Ascending aorta (tissue), 2 donors: ENCODE measurements at regions of chr6 and their contacts with region 1.

Region 1: GRCh38 chr6:31665501-31666336 is at the start of gene CSNK2B:
- DNase-seq: peak; percentile 97 to 99
- H3K4me3 ChIP-seq: peak within 1 kb of the TSS; percentile 72 to 97
- H3K27ac ChIP-seq: peak within 1 kb of the TSS; percentile 91 to 97
- H3K4me1 ChIP-seq: peaks cover 16 to 34% of the 10 kb centered on the region in 2 donors
- H3K27me3 ChIP-seq: no peaks in the 10 kb centered on the region
- CTCF ChIP-seq: peak in 1 of 3 experiments; percentile 35
- total RNA-seq, gene CSNK2B: 148 TPM

Region 2: DNA sequence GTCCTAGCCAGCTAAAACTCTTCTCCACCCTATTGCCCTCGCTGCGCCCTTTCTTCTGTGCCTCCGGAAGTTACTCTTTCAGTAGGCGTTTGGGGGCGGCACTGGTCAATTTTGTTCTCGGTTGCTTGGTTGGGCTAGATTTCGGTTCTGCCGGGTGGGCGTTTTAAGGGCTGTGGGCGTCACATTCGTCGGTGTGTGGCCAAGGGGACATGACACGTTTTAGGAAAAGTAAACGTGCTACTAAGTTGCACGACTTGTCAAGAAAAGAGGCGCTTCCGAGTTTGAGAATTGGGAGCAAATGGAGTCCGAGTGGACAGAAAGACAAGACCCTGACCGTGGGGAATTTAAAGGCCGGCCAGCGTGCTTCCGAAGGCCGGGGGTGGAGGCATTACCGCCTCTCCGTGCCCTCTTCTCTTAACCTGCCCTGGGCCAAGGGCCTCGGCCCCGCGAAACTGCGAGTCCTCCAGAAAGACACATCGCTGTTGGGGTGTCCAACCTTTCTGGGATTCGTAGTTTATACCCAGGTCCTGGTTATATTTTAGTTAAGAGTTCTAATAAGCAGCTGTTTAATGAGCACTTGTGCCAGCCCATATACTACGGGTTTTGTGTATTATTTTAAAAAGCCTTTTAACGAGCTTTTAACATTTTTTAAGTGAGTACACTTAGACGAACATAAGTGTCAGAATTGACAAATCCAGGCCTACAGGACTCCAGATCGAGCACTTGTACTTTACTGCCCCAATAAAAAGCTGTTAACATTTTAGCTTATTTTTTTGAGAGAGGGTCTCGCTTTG is 12.6 kb before region 1 on chr6:
- intact Hi-C with region 1: loop called (anchors 1 kb)
- DNase-seq: peak; percentile 56 to 96
- H3K4me3 ChIP-seq: peak overlapping the region; percentile 70 to 86
- H3K27ac ChIP-seq: peak overlapping the region; percentile 93 to 98
- H3K4me1 ChIP-seq: peaks cover 4 to 19% of the 10 kb centered on the region in 2 donors
- H3K27me3 ChIP-seq: no peaks in the 10 kb centered on the region
- CTCF ChIP-seq: peak in 1 of 3 experiments; percentile 26

Region 3: DNA sequence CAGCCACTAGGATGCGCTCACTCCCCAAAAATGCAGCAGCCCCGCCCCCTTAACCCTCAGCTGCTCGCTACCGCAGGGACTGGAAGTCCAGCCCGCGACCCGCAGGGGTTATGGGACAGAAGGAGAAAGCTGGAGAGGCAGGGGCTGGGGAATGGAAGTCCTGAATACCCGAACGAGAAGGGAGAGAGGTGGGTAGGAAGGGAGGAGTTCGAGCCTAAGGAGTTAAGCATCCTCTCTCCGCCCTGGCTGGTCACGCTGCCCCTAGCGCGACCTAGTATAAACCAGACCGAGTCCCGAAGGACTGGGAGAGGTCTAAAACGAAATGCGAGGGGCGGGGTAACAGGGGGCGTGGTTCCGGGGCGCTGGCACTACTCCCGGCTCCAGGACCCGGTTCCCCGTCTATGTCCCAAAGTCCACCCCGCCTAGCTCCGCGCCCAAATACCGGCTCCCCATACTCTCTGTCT is 63.8 kb after region 1 on chr6:
- intact Hi-C with region 1: loop called (anchors 2 kb)
- DNase-seq: peak; percentile 83 to 96
- H3K4me3 ChIP-seq: peak overlapping the region; percentile 69 to 96
- H3K27ac ChIP-seq: peak overlapping the region; percentile 95 to 99
- H3K4me1 ChIP-seq: peaks cover 22 to 31% of the 10 kb centered on the region in 2 donors
- H3K27me3 ChIP-seq: no peaks in the 10 kb centered on the region
- CTCF ChIP-seq: peak in 1 of 3 experiments; percentile 68

Region 4: GRCh38 chr6:31776989-31777666 is 111.4 kb after region 1 on chr6 and contains the start of gene VWA7:
- intact Hi-C with region 1: no loop called
- DNase-seq: peak in 1 of 2 donors; percentile 73
- H3K4me3 ChIP-seq: no peak within 1 kb of the TSS
- H3K27ac ChIP-seq: no peak within 1 kb of the TSS
- H3K4me1 ChIP-seq: peaks cover 0 to 6% of the 10 kb centered on the region in 2 donors
- H3K27me3 ChIP-seq: no peaks in the 10 kb centered on the region
- CTCF ChIP-seq: no peak
- total RNA-seq, gene VWA7: not detected

Region 5: GRCh38 chr6:31958741-31959739 is 293.3 kb after region 1 on chr6 and contains the starts of genes NELFE and SKIC2:
- intact Hi-C with region 1: loop called (anchors 5 kb)
- DNase-seq: peak; percentile 92 to 99
- H3K4me3 ChIP-seq: peak within 1 kb of the TSS; percentile 78 to 96
- H3K27ac ChIP-seq: peak within 1 kb of the TSS; percentile 85 to 88
- H3K4me1 ChIP-seq: peaks cover 3 to 23% of the 10 kb centered on the region in 2 donors
- H3K27me3 ChIP-seq: no peaks in the 10 kb centered on the region
- CTCF ChIP-seq: no peak
- total RNA-seq, gene NELFE: 208 TPM
- total RNA-seq, gene SKIC2: 77.4 TPM

Region 6: GRCh38 chr6:32195652-32195901 is 529.9 kb after region 1 on chr6:
- intact Hi-C with region 1: loop called (anchors 5 kb)
- DNase-seq: peak; percentile 100
- H3K4me3 ChIP-seq: peak overlapping the region; percentile 78 to 88
- H3K27ac ChIP-seq: peak overlapping the region; percentile 99 to 100
- H3K4me1 ChIP-seq: peaks cover 8 to 19% of the 10 kb centered on the region in 2 donors
- H3K27me3 ChIP-seq: no peaks in the 10 kb centered on the region
- CTCF ChIP-seq: peak in 1 of 3 experiments; percentile 63